ENCODE measurements at regions of chr7 and their contacts with region 1.

Region 1: DNA sequence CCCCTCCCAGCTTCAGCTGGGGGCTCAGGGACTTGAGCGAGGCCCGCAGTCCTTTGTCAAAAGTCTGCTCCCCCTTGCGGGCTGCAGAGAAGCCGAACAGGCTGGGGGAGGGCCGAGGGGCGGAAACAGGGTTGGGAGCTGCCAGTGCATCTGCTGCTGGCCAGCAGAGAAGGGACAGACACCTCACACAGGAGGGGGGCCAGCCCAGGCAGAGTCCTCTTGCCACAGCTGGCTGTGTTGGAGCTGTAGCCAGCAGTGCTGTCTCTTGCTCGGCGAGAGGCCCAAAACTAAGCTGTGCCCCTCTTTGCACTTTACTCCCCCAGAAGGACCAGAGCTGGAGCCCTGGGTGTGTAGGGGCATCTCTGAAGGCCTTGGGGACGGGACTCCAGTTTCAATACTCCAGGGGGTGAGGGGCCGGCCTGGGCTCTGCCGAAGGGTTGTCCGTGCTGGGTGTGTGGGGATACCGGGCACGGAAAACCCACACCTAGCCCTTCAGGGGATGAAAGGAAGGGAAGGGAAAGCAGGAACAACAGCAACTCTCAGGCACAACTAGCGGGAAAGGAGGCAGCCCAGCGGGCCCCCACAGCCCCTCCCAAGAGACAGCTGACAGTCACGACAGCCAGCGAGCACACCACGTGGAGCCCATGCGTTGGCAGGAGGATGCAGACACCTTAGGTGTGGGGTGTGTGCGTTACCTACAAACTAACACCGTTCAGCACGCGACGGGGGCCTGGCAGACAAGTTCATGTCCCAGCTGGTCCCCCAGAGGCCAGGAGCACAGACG is 17.8 kb downstream of the YKT6 start:
- DNase-seq: no peak
- ATAC-seq: no peak
- H3K4me3 ChIP-seq: no peak overlapping the region
- H3K4me3 Mint-ChIP-seq: no peak overlapping the region
- H3K27ac ChIP-seq: no peak overlapping the region
- H3K27ac Mint-ChIP-seq: no peak overlapping the region
- H3K4me1 ChIP-seq: no peaks in the 10 kb centered on the region
- H3K4me1 Mint-ChIP-seq: peaks cover 0 to 2% (median 0%) of the 10 kb centered on the region in 3 donors
- H3K27me3 ChIP-seq: peaks cover 0 to 3% of the 10 kb centered on the region in 2 experiments
- H3K27me3 Mint-ChIP-seq: no peaks in the 10 kb centered on the region

Region 2: GRCh38 chr7:44727158-44727933 is 508.7 kb after region 1 on chr7:
- CTCF ChIA-PET with region 1: no interaction called
- POLR2A ChIA-PET with region 1: interaction called in 1 of 2 experiments, 10 read pairs
- DNase-seq: no peak
- ATAC-seq: no peak
- H3K4me3 ChIP-seq: no peak overlapping the region
- H3K4me3 Mint-ChIP-seq: no peak overlapping the region
- H3K27ac ChIP-seq: no peak overlapping the region
- H3K27ac Mint-ChIP-seq: no peak overlapping the region
- H3K4me1 ChIP-seq: no peaks in the 10 kb centered on the region
- H3K4me1 Mint-ChIP-seq: peaks cover 0 to 6% (median 0%) of the 10 kb centered on the region in 3 donors
- H3K27me3 ChIP-seq: peaks cover 0 to 6% of the 10 kb centered on the region in 2 experiments
- H3K27me3 Mint-ChIP-seq: peaks cover 5 to 6% of the 10 kb centered on the region in 2 donors

Measured in T-cell (primary cell).